T-cell (primary cell): ENCODE measurements at regions of chr3 and their contacts with region 1.

Region 1: GRCh38 chr3:33372218-33373081 is 67.8 kb downstream of the UBP1 start:
- DNase-seq: peak in 29 of 35 experiments; percentile 2 to 66 (median 24)
- ATAC-seq: peak; percentile 54 to 75 (median 63)
- H3K4me3 ChIP-seq: no peak overlapping the region
- H3K4me3 Mint-ChIP-seq: no peak overlapping the region
- H3K27ac ChIP-seq: no peak overlapping the region
- H3K27ac Mint-ChIP-seq: no peak overlapping the region
- H3K4me1 ChIP-seq: peaks cover 0 to 5% of the 10 kb centered on the region in 2 experiments
- H3K4me1 Mint-ChIP-seq: peaks cover 1 to 8% (median 3%) of the 10 kb centered on the region in 3 donors
- H3K27me3 ChIP-seq: peaks cover 0 to 3% of the 10 kb centered on the region in 2 experiments
- H3K27me3 Mint-ChIP-seq: peaks cover 17 to 19% of the 10 kb centered on the region in 2 donors

Region 2: GRCh38 chr3:31472479-31473390 is 1899.7 kb before region 1 on chr3:
- CTCF ChIA-PET with region 1: no interaction called
- POLR2A ChIA-PET with region 1: no interaction called
- DNase-seq: peak in 2 of 35 experiments; percentile 4 to 36
- ATAC-seq: peak in 3 of 4 experiments; percentile 45 to 64 (median 45)
- H3K4me3 ChIP-seq: no peak overlapping the region
- H3K4me3 Mint-ChIP-seq: no peak overlapping the region
- H3K27ac ChIP-seq: no peak overlapping the region
- H3K27ac Mint-ChIP-seq: peak overlapping the region in 1 of 2 donors; percentile 71
- H3K4me1 ChIP-seq: no peaks in the 10 kb centered on the region
- H3K4me1 Mint-ChIP-seq: peaks cover 14 to 28% (median 26%) of the 10 kb centered on the region in 3 donors
- H3K27me3 ChIP-seq: no peaks in the 10 kb centered on the region
- H3K27me3 Mint-ChIP-seq: no peaks in the 10 kb centered on the region

Region 3: DNA sequence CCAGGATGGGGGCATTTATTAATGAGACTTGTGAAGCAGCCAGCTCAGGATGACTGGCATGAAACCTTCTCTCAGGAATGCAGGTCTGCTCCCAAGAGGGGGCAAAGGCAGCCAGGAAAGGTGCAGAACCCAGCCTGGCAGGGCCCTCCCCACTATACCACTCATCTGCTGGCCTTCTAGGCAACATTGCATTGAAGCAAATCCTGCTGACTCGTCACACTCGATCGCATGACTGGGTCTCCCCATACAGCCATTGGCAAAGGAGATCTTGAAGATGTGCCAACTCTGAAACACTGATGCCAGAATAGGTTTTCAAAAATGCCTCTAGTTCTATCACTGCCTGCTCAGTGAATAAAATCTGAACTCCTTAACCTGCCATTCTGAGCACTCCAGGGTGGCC is 1046.5 kb before region 1 on chr3:
- CTCF ChIA-PET with region 1: no interaction called
- POLR2A ChIA-PET with region 1: interaction called in 1 of 2 experiments, 13 read pairs
- DNase-seq: no peak
- ATAC-seq: no peak
- H3K4me3 ChIP-seq: no peak overlapping the region
- H3K4me3 Mint-ChIP-seq: no peak overlapping the region
- H3K27ac ChIP-seq: no peak overlapping the region
- H3K27ac Mint-ChIP-seq: no peak overlapping the region
- H3K4me1 ChIP-seq: peaks cover 0 to 4% of the 10 kb centered on the region in 2 experiments
- H3K4me1 Mint-ChIP-seq: peaks cover 10 to 26% (median 14%) of the 10 kb centered on the region in 3 donors
- H3K27me3 ChIP-seq: peaks cover 0 to 4% of the 10 kb centered on the region in 2 experiments
- H3K27me3 Mint-ChIP-seq: no peaks in the 10 kb centered on the region

Region 4: GRCh38 chr3:32947789-32948238 is 424.6 kb before region 1 on chr3:
- CTCF ChIA-PET with region 1: interaction called, 7 to 40 read pairs
- POLR2A ChIA-PET with region 1: no interaction called
- DNase-seq: peak; percentile 65 to 96 (median 85)
- ATAC-seq: peak; percentile 68 to 76 (median 74)
- H3K4me3 ChIP-seq: no peak overlapping the region
- H3K4me3 Mint-ChIP-seq: no peak overlapping the region
- H3K27ac ChIP-seq: no peak overlapping the region
- H3K27ac Mint-ChIP-seq: peak overlapping the region in 1 of 2 donors; percentile 28
- H3K4me1 ChIP-seq: peaks cover 7 to 28% of the 10 kb centered on the region in 2 experiments
- H3K4me1 Mint-ChIP-seq: peaks cover 30 to 42% (median 37%) of the 10 kb centered on the region in 3 donors
- H3K27me3 ChIP-seq: peaks cover 0 to 3% of the 10 kb centered on the region in 2 experiments
- H3K27me3 Mint-ChIP-seq: no peaks in the 10 kb centered on the region

Region 5: DNA sequence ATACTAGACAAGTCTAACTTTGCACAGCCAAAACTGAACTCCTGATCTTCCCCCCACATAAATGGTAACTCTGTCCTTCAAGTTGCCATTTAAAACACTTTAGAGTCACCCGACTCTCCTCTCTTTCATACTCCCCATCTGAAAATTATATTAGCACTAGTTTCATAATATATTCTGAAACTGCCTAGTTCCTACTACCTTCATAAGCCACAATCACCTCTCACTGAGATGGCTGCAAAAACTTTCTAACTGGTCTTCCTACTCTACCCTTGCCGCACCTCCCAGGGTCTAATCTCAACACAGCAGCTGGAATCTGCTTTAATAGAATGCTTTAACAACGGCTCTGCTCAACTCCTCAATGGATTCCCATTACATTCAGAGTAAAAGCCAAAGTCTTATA is 330.5 kb before region 1 on chr3:
- CTCF ChIA-PET with region 1: interaction called in 1 of 2 experiments, 10 read pairs
- POLR2A ChIA-PET with region 1: no interaction called
- DNase-seq: no peak
- ATAC-seq: no peak
- H3K4me3 ChIP-seq: no peak overlapping the region
- H3K4me3 Mint-ChIP-seq: no peak overlapping the region
- H3K27ac ChIP-seq: no peak overlapping the region
- H3K27ac Mint-ChIP-seq: peak overlapping the region; percentile 7 to 68
- H3K4me1 ChIP-seq: peaks cover 20 to 31% of the 10 kb centered on the region in 2 experiments
- H3K4me1 Mint-ChIP-seq: peaks cover 41 to 60% (median 47%) of the 10 kb centered on the region in 3 donors
- H3K27me3 ChIP-seq: no peaks in the 10 kb centered on the region
- H3K27me3 Mint-ChIP-seq: no peaks in the 10 kb centered on the region

Region 6: DNA sequence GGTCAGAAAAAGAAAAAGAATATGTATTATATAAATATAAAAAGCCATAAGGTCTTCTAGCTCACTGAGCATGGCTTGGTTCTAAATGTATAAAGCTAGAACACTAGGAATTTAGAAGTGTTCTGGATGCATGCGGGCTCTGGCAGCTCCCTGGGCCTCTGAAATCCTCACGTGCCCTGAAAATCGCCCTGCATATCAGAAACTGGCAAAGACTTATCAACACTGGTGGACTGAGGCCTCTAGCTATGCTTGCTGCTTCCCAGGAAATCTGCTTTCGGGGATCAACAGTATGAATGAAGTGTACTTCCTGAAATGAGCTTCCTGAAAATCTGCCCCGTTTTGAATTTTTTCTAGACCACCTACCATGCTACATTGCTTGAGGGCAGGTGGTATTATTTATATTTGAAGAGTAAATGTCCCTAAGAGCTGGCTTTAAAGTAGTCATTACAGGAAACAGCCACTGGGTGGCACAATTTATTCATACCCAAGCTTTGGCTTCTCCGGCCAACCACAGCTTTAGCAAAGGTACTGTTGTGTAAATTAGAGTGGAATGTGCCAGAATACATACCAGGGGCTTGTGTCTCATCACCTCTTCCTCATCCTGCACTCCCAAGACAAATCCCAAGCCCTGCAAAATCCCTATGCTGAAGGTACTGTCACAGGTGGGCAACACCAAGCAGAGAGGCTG is 241.0 kb before region 1 on chr3:
- CTCF ChIA-PET with region 1: interaction called, 15 to 28 read pairs
- POLR2A ChIA-PET with region 1: no interaction called
- DNase-seq: peak in 15 of 35 experiments; percentile 6 to 64 (median 18)
- ATAC-seq: peak in 3 of 4 experiments; percentile 58 to 72 (median 63)
- H3K4me3 ChIP-seq: no peak overlapping the region
- H3K4me3 Mint-ChIP-seq: no peak overlapping the region
- H3K27ac ChIP-seq: no peak overlapping the region
- H3K27ac Mint-ChIP-seq: no peak overlapping the region
- H3K4me1 ChIP-seq: peaks cover 0 to 2% of the 10 kb centered on the region in 2 experiments
- H3K4me1 Mint-ChIP-seq: peaks cover 0 to 7% (median 4%) of the 10 kb centered on the region in 3 donors
- H3K27me3 ChIP-seq: no peaks in the 10 kb centered on the region
- H3K27me3 Mint-ChIP-seq: no peaks in the 10 kb centered on the region

Region 7: DNA sequence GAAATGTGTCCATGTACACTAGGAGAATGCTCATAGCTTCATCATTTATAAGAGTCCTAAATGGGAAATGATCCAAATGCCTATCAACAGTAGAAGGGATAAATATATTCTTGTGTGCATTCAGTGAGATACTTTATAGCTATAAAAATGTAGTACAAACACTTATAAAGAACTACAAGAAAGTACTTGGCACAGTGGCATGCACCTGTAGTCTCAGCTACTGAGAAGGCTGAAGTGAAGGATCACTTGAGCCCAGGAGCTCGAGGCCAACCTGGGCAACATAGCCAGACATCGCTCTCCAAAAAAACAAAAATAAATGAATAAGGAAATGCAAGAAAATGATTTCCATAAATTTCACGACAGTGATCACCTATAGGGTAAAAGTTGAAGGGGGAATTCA is 98.8 kb before region 1 on chr3:
- CTCF ChIA-PET with region 1: no interaction called
- POLR2A ChIA-PET with region 1: no interaction called
- DNase-seq: no peak
- ATAC-seq: no peak
- H3K4me3 ChIP-seq: no peak overlapping the region
- H3K4me3 Mint-ChIP-seq: no peak overlapping the region
- H3K27ac ChIP-seq: no peak overlapping the region
- H3K27ac Mint-ChIP-seq: no peak overlapping the region
- H3K4me1 ChIP-seq: peaks cover 0 to 5% of the 10 kb centered on the region in 2 experiments
- H3K4me1 Mint-ChIP-seq: peaks cover 7 to 9% (median 7%) of the 10 kb centered on the region in 3 donors
- H3K27me3 ChIP-seq: peaks cover 0 to 27% of the 10 kb centered on the region in 2 experiments
- H3K27me3 Mint-ChIP-seq: peaks cover 42 to 47% of the 10 kb centered on the region in 2 donors